Cardiac septum (tissue), 1 donor: ENCODE measurements at regions of chr4 and their contacts with region 1.

Region 1: GRCh38 chr4:167021545-167022155 is 212.6 kb downstream of the SPOCK3 start:
- DNase-seq: no peak

Region 2: GRCh38 chr4:167290678-167291077 is 269.0 kb after region 1 on chr4:
- intact Hi-C with region 1: loop called (anchors 1 kb)
- DNase-seq: no peak

Region 3: DNA sequence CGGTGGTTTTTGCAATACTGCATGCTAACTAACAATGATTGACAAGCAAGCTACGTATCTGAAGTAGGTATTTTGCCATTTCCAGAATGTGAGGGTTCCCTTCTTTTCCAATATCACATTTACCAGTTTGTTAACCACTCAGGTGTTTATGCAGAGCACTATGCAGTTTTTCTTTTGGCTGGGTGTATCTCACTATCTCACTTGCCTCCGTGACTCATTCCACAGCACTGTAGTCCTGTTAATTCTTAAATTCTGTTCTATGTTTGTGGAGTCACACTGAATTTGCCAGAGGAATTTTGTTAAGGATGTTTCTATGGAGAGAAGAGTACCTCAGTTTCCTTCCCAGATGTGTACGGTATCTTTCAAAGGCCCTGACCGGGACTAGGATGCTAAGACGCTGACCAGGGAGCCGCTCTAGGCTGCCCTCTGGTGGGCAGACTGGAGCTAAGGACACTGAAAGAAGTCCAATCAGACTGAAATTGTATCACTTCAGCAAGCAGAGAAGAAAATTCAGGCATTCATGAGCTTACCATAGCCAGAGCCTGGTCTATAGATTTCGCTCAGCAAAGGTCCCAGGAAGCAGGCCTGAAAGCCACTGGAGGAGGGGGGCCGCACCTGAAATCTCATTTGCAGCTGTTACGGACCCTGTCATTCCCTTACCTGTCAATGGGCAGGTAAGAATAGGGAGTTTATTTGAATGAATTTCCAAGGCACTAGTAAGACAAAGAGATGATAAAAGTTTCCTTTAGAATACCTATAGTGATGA is 601.0 kb after region 1 on chr4:
- intact Hi-C with region 1: loop called (anchors 5 kb)
- DNase-seq: peak; percentile 64